CD8-positive, alpha-beta T cell (primary cell): ENCODE measurements at regions of chr19 and their contacts with region 1.

Region 1: GRCh38 chr19:7799640-7800355 is 30.2 kb upstream of the EVI5L start:
- DNase-seq: peak in 8 of 9 experiments; percentile 15 to 77 (median 66)
- ATAC-seq: no peak
- H3K4me3 ChIP-seq: no peak overlapping the region
- H3K4me3 Mint-ChIP-seq: no peak overlapping the region
- H3K27ac ChIP-seq: no peak overlapping the region
- H3K27ac Mint-ChIP-seq: no peak overlapping the region
- H3K4me1 ChIP-seq: no peaks in the 10 kb centered on the region
- H3K4me1 Mint-ChIP-seq: peaks cover 4% of the 10 kb centered on the region
- H3K27me3 ChIP-seq: peaks cover 0 to 4% of the 10 kb centered on the region in 2 experiments
- H3K27me3 Mint-ChIP-seq: peaks cover 11% of the 10 kb centered on the region
- CTCF ChIP-seq: peak; percentile 69

Region 2: GRCh38 chr19:7562646-7563393 is 237.0 kb before region 1 on chr19:
- CTCF ChIA-PET with region 1: interaction called, 61 read pairs
- POLR2A ChIA-PET with region 1: no interaction called
- intact Hi-C with region 1: loop called in 1 of 2 experiments (anchors 1 kb)
- DNase-seq: peak in 1 of 9 experiments; percentile 23
- ATAC-seq: no peak
- H3K4me3 ChIP-seq: no peak overlapping the region
- H3K4me3 Mint-ChIP-seq: no peak overlapping the region
- H3K27ac ChIP-seq: no peak overlapping the region
- H3K27ac Mint-ChIP-seq: no peak overlapping the region
- H3K4me1 ChIP-seq: no peaks in the 10 kb centered on the region
- H3K4me1 Mint-ChIP-seq: no peaks in the 10 kb centered on the region
- H3K27me3 ChIP-seq: no peaks in the 10 kb centered on the region
- H3K27me3 Mint-ChIP-seq: no peaks in the 10 kb centered on the region
- CTCF ChIP-seq: no peak

Region 3: DNA sequence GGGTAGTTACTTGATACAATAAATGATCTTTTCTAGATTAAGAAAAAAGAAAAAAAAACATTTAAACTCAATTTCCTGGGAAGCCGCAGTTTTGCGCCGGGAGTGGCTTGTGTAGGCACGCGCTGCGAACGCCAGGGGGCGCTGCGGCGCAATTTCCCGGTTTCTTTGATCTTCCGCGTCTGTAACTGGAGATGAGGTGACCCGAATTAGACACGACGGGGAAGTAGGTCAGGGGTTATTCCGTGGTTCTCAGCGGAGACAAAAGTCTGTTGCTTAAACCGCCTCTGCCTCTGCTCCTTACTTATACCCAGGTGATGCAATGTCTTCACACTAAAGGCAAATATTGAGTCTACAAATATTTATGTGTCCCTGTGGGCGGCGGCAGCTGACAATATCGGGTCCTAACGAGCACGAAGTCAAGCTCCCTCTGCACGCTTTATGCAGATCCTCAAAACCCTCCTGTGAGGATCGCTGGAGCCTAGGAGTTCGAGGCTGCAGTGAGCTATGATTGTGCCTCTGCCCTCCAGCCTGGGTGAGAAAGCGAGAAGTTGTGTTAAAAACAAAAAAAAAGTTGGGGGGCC is 147.6 kb before region 1 on chr19:
- CTCF ChIA-PET with region 1: interaction called, 66 read pairs
- POLR2A ChIA-PET with region 1: no interaction called
- intact Hi-C with region 1: loop called (anchors 1 kb)
- DNase-seq: peak; percentile 78 to 96 (median 88)
- ATAC-seq: peak; percentile 93
- H3K4me3 ChIP-seq: peak overlapping the region; percentile 34 to 45
- H3K4me3 Mint-ChIP-seq: peak overlapping the region; percentile 75
- H3K27ac ChIP-seq: peak overlapping the region in 1 of 2 experiments; percentile 28
- H3K27ac Mint-ChIP-seq: peak overlapping the region; percentile 90
- H3K4me1 ChIP-seq: peaks cover 5% of the 10 kb centered on the region
- H3K4me1 Mint-ChIP-seq: peaks cover 10% of the 10 kb centered on the region
- H3K27me3 ChIP-seq: no peaks in the 10 kb centered on the region
- H3K27me3 Mint-ChIP-seq: peaks cover 3% of the 10 kb centered on the region
- CTCF ChIP-seq: peak; percentile 99

Region 4: DNA sequence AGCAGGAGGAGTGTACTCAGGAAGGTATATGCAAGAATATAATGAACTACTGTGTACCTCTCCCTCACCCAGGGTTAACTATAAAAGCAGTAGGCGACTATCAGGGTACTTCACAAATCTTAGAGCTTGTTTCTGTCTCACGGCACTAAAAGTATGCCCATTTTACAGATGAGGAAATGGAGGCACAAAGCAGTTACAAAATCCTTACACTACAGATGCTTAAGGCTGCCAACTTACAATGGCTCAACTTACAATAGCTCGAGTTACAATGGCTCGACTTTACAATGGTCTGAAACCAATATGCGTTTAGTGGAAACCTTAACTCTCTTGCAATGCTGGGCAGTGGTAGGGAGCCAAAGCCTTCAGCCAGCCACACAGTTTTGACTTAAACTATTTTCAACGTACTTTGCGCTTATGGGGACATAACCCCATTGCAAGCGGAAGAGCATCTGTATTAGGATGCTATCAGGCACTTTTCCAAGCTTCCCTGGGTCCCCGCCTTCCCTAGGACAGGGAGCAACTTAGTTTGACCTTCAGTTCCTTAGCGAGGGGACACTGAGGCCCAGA is 102.0 kb before region 1 on chr19:
- CTCF ChIA-PET with region 1: interaction called, 13 read pairs
- POLR2A ChIA-PET with region 1: no interaction called
- intact Hi-C with region 1: no loop called
- DNase-seq: no peak
- ATAC-seq: no peak
- H3K4me3 ChIP-seq: no peak overlapping the region
- H3K4me3 Mint-ChIP-seq: no peak overlapping the region
- H3K27ac ChIP-seq: no peak overlapping the region
- H3K27ac Mint-ChIP-seq: no peak overlapping the region
- H3K4me1 ChIP-seq: peaks cover 4% of the 10 kb centered on the region
- H3K4me1 Mint-ChIP-seq: peaks cover 13% of the 10 kb centered on the region
- H3K27me3 ChIP-seq: peaks cover 0 to 4% of the 10 kb centered on the region in 2 experiments
- H3K27me3 Mint-ChIP-seq: peaks cover 8% of the 10 kb centered on the region
- CTCF ChIP-seq: no peak

Region 5: GRCh38 chr19:7815325-7815724 is 15.5 kb after region 1 on chr19:
- CTCF ChIA-PET with region 1: interaction called, 19 read pairs
- POLR2A ChIA-PET with region 1: no interaction called
- intact Hi-C with region 1: no loop called
- DNase-seq: peak in 3 of 9 experiments; percentile 13 to 31 (median 25)
- ATAC-seq: peak; percentile 69
- H3K4me3 ChIP-seq: no peak overlapping the region
- H3K4me3 Mint-ChIP-seq: peak overlapping the region; percentile 53
- H3K27ac ChIP-seq: no peak overlapping the region
- H3K27ac Mint-ChIP-seq: no peak overlapping the region
- H3K4me1 ChIP-seq: peaks cover 10% of the 10 kb centered on the region
- H3K4me1 Mint-ChIP-seq: peaks cover 12% of the 10 kb centered on the region
- H3K27me3 ChIP-seq: no peaks in the 10 kb centered on the region
- H3K27me3 Mint-ChIP-seq: peaks cover 13% of the 10 kb centered on the region
- CTCF ChIP-seq: no peak